Panc1 (cell line): ENCODE measurements at regions of chr2 and their contacts with region 1.

Region 1: DNA sequence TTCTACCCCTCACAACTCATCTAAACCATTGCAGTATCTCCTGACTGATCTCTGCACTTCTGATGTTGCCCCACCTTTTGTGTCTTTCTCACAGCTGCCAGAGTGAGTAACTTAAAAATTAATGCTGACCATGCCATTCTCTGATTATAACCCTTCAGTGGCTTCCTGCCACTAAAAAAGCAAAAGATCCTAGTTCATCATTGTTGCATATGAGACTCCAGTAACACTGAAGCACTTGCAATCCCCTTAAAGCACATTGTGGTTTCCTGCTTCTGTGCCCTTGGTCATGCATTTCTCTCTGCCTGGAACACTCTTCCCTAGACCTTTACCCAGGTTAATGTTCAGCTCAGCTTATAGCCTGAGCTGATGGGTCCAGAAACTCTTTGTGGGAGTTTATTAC is 95.1 kb upstream of the WDSUB1 start:
- DNase-seq: no peak
- ATAC-seq: no peak
- H3K4me3 ChIP-seq: no peak overlapping the region
- H3K27ac ChIP-seq: no peak overlapping the region
- H3K4me1 ChIP-seq: no peaks in the 10 kb centered on the region
- H3K27me3 ChIP-seq: no peaks in the 10 kb centered on the region
- CTCF ChIP-seq: no peak

Region 2: DNA sequence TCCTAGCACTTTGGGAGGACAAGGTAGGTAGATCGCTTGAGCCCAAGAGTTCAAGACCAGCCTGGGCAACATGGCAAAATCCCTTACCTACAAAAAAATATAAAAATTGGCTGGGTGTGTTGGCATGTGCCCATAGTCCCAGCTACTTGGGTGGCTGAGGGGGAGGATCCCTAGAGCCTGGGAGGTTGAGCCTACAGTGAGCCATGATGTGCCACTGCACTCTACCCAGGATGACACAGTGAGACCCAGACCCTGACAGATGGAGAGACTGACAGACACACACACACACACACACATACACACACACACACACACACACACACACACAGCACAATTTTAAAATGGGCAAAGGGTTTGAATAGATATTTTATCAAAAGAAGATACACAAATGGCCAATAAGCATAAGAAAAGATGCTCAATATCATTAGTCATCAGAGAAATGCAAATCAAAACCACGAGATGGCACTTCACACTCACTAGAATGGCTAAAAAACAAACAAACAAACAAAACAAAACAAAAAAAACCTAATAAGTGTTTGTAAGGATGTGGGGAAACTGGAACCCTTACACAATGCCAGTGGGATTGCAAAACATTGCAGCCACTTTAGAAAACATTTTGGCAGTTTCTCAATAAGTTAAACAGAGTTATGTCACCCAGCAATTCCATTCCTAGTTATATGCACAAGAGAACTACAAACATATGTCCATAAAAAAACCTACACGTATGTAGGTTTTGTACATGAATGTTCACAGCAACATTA is 192.5 kb after region 1 on chr2:
- CTCF ChIA-PET with region 1: no interaction called
- POLR2A ChIA-PET with region 1: interaction called, 11 read pairs
- in situ Hi-C with region 1: no loop called
- intact Hi-C with region 1: no loop called
- DNase-seq: no peak
- ATAC-seq: no peak
- H3K4me3 ChIP-seq: no peak overlapping the region
- H3K27ac ChIP-seq: no peak overlapping the region
- H3K4me1 ChIP-seq: no peaks in the 10 kb centered on the region
- H3K27me3 ChIP-seq: no peaks in the 10 kb centered on the region
- CTCF ChIP-seq: no peak